H1 (cell line): ENCODE measurements at regions of chr13 and their contacts with region 1.

Region 1: DNA sequence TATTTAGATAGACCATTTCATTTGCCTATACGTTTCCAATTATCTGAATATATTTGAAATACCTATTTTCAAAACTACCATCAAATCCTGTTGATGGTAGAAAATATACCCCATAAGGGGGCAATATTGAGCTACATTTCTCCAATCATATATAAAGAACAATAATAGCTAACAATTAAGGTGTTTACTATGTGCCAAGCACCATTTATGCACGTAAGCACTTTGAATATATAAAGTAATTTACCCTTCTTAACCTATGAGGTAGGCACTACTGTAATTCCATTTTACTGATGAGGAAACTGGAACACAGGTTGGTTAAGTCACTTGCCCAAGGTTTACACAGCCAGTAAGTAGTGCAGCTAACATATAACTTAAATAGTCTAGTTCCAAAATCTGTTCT is 79.2 kb downstream of the UBL3 start:
- DNase-seq: no peak
- H3K4me3 ChIP-seq: no peak overlapping the region
- H3K27ac ChIP-seq: no peak overlapping the region
- H3K4me1 ChIP-seq: no peaks in the 10 kb centered on the region
- H3K27me3 ChIP-seq: no peaks in the 10 kb centered on the region
- CTCF ChIP-seq: peak in 1 of 3 experiments; percentile 15; a peak in 1 of 4 replicates
- EP300 ChIP-seq: no peak
- POLR2A ChIP-seq: no peak
- RAD21 ChIP-seq: peak in 1 of 2 experiments; percentile 56; a peak in 3 of 4 replicates

Region 2: DNA sequence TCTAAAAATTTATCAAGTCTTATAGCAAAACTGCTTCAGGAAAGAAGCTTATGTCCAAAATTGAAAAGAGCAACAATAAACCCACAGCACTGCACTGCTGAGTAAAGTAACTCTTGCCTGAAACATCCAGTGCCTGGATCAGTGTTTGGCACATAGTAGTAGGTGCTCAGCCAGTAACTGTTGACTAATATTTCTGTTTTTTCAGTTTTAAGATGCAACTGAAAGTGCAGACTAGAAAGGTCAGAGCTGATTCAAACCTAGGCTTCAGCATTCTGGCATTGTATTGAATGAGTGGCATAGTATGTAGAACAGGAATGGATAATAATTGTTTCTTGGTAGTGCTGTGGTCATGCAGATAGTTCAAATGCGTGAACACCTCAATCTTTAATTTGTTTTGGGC is 11.6 kb after region 1 on chr13:
- CTCF ChIA-PET with region 1: interaction called, 12 read pairs
- POLR2A ChIA-PET with region 1: no interaction called
- DNase-seq: no peak
- H3K4me3 ChIP-seq: no peak overlapping the region
- H3K27ac ChIP-seq: no peak overlapping the region
- H3K4me1 ChIP-seq: no peaks in the 10 kb centered on the region
- H3K27me3 ChIP-seq: no peaks in the 10 kb centered on the region
- CTCF ChIP-seq: no peak
- EP300 ChIP-seq: no peak
- POLR2A ChIP-seq: no peak
- RAD21 ChIP-seq: no peak

Region 3: DNA sequence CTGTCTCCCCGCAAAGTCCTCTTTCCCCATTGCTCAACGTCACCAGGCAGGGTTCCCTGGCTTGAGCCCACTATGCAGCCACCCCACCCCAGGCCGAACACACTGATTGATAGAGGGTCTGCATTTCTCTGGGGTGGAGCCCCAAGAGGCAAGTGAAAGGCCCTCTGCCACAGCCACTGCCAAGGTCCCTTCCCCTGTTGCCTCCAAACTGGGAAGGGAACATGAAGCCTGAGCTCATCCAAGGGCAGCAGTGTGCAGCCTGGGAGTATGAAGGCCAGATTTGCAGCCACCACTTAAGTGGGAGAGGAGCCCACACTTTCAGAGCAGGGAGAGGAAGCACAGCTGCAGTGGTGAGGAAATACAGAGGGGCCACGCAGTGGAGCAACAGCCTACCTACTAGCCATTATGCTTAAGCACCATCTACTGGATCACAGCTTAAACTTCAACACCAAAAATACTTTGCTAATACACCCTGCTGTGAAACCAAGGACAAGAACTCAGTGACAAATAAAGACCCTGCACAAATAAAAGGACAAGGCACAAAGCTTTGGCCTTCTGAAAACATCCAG is 30.6 kb after region 1 on chr13:
- CTCF ChIA-PET with region 1: interaction called, 10 read pairs
- POLR2A ChIA-PET with region 1: no interaction called
- DNase-seq: no peak
- H3K4me3 ChIP-seq: no peak overlapping the region
- H3K27ac ChIP-seq: no peak overlapping the region
- H3K4me1 ChIP-seq: peaks cover 0 to 9% (median under 1%) of the 10 kb centered on the region in 4 experiments; a peak in 2 of 7 replicates
- H3K27me3 ChIP-seq: no peaks in the 10 kb centered on the region
- CTCF ChIP-seq: peak in 1 of 3 experiments; percentile 8; a peak in 2 of 4 replicates
- EP300 ChIP-seq: no peak
- POLR2A ChIP-seq: no peak
- RAD21 ChIP-seq: peak in 1 of 2 experiments; percentile 47; a peak in 2 of 4 replicates

Region 4: GRCh38 chr13:30107581-30107992 is 336.3 kb after region 1 on chr13:
- CTCF ChIA-PET with region 1: interaction called, 44 read pairs
- POLR2A ChIA-PET with region 1: no interaction called
- DNase-seq: no peak
- H3K4me3 ChIP-seq: no peak overlapping the region
- H3K27ac ChIP-seq: no peak overlapping the region
- H3K4me1 ChIP-seq: peaks cover 0 to 4% (median 1%) of the 10 kb centered on the region in 4 experiments; a peak in 2 of 7 replicates
- H3K27me3 ChIP-seq: peaks cover 0 to 7% (median 2%) of the 10 kb centered on the region in 4 experiments; a peak in 2 of 7 replicates
- CTCF ChIP-seq: no peak
- EP300 ChIP-seq: no peak
- POLR2A ChIP-seq: no peak
- RAD21 ChIP-seq: no peak